Pancreas (tissue), 10 donors: ENCODE measurements at regions of chr13 and their contacts with region 1.

Region 1: DNA sequence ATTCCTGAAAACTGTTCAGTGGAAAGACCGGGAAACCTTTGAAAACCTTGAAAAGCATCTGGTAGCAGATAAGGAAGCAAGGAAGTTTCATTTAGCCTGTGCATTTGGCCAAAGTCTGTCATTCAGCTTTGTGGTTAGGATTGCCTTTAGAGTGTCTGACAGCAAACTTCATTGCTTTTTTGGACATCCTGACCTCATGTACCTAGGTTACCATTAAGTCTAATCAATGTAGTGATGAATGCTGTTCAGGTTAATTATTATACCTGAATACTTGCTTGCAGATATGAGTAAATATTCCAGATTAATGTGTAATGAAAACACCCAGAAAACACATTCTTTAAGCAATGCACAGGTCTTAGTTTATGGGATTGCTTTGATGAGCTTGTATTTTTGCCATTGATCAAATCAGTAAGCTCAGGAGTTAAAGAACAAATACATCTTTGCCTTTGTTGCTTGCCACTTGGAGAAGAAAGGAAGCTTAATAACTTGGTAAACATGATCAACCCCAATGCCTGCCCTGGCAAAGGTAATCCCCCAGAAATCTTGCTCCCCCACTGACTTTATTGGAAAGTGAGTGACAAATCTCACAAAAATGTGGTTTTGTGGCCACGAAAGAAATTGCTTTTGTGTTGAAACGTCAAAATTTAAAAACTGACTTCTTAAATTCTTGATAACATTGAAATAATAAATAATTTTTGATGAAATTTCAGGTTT is 87.4 kb downstream of the SLC15A1 start:
- DNase-seq: no peak
- ATAC-seq: peak; percentile 30 to 66 (median 64)
- H3K4me3 ChIP-seq: no peak overlapping the region
- H3K27ac ChIP-seq: peak overlapping the region in 1 of 4 donors; percentile 33
- H3K4me1 ChIP-seq: peaks cover 5 to 19% (median 18%) of the 10 kb centered on the region in 3 donors
- H3K27me3 ChIP-seq: no peaks in the 10 kb centered on the region
- CTCF ChIP-seq: no peak

Region 2: GRCh38 chr13:97999653-98000052 is 665.4 kb before region 1 on chr13:
- intact Hi-C with region 1: no loop called
- DNase-seq: no peak
- ATAC-seq: no peak
- H3K4me3 ChIP-seq: no peak overlapping the region
- H3K27ac ChIP-seq: no peak overlapping the region
- H3K4me1 ChIP-seq: no peaks in the 10 kb centered on the region
- H3K27me3 ChIP-seq: no peaks in the 10 kb centered on the region
- CTCF ChIP-seq: no peak

Region 3: GRCh38 chr13:98456413-98456845 is 208.7 kb before region 1 on chr13:
- intact Hi-C with region 1: loop called in 1 of 3 experiments (anchors 5 kb)
- DNase-seq: peak in 1 of 6 donors; percentile 54
- ATAC-seq: peak in 2 of 4 donors; percentile 23 to 43
- H3K4me3 ChIP-seq: no peak overlapping the region
- H3K27ac ChIP-seq: no peak overlapping the region
- H3K4me1 ChIP-seq: no peaks in the 10 kb centered on the region
- H3K27me3 ChIP-seq: no peaks in the 10 kb centered on the region
- CTCF ChIP-seq: no peak

Region 4: GRCh38 chr13:98794498-98794897 is 129.4 kb after region 1 on chr13:
- intact Hi-C with region 1: no loop called
- DNase-seq: no peak
- ATAC-seq: no peak
- H3K4me3 ChIP-seq: no peak overlapping the region
- H3K27ac ChIP-seq: no peak overlapping the region
- H3K4me1 ChIP-seq: no peaks in the 10 kb centered on the region
- H3K27me3 ChIP-seq: no peaks in the 10 kb centered on the region
- CTCF ChIP-seq: no peak